ENCODE measurements at regions of chr7 and their contacts with region 1.

Region 1: GRCh38 chr7:131507592-131508331 is 48.7 kb downstream of the PODXL start:
- DNase-seq: peak; percentile 47 to 85
- H3K4me3 ChIP-seq: no peak overlapping the region
- H3K27ac ChIP-seq: no peak overlapping the region
- H3K4me1 ChIP-seq: no peaks in the 10 kb centered on the region
- H3K27me3 ChIP-seq: no peaks in the 10 kb centered on the region
- CTCF ChIP-seq: peak; percentile 95

Region 2: GRCh38 chr7:131581241-131582051 is 73.7 kb after region 1 on chr7:
- CTCF ChIA-PET with region 1: interaction called, 12 read pairs
- POLR2A ChIA-PET with region 1: no interaction called
- intact Hi-C with region 1: no loop called
- DNase-seq: no peak
- H3K4me3 ChIP-seq: no peak overlapping the region
- H3K27ac ChIP-seq: no peak overlapping the region
- H3K4me1 ChIP-seq: peaks cover 9% of the 10 kb centered on the region
- H3K27me3 ChIP-seq: no peaks in the 10 kb centered on the region
- CTCF ChIP-seq: no peak

Region 3: GRCh38 chr7:131654668-131655326 is 147.0 kb after region 1 on chr7:
- CTCF ChIA-PET with region 1: interaction called, 3 read pairs
- POLR2A ChIA-PET with region 1: no interaction called
- intact Hi-C with region 1: loop called (anchors 1 kb)
- DNase-seq: peak; percentile 72 to 90
- H3K4me3 ChIP-seq: no peak overlapping the region
- H3K27ac ChIP-seq: 0 out of 2 replicates have a peak overlapping the region, but pooled peaks have one; percentile 54
- H3K4me1 ChIP-seq: peaks cover 17% of the 10 kb centered on the region
- H3K27me3 ChIP-seq: no peaks in the 10 kb centered on the region
- CTCF ChIP-seq: peak; percentile 97

Region 4: GRCh38 chr7:131753620-131754222 is 246.0 kb after region 1 on chr7:
- CTCF ChIA-PET with region 1: no interaction called
- POLR2A ChIA-PET with region 1: no interaction called
- intact Hi-C with region 1: no loop called
- DNase-seq: peak in 1 of 2 experiments; percentile 9
- H3K4me3 ChIP-seq: no peak overlapping the region
- H3K27ac ChIP-seq: no peak overlapping the region
- H3K4me1 ChIP-seq: no peaks in the 10 kb centered on the region
- H3K27me3 ChIP-seq: peaks cover 64% of the 10 kb centered on the region
- CTCF ChIP-seq: peak; percentile 60

Measured in PC-9 (cell line).